ENCODE measurements at regions of chr14 and their contacts with region 1.

Region 1: DNA sequence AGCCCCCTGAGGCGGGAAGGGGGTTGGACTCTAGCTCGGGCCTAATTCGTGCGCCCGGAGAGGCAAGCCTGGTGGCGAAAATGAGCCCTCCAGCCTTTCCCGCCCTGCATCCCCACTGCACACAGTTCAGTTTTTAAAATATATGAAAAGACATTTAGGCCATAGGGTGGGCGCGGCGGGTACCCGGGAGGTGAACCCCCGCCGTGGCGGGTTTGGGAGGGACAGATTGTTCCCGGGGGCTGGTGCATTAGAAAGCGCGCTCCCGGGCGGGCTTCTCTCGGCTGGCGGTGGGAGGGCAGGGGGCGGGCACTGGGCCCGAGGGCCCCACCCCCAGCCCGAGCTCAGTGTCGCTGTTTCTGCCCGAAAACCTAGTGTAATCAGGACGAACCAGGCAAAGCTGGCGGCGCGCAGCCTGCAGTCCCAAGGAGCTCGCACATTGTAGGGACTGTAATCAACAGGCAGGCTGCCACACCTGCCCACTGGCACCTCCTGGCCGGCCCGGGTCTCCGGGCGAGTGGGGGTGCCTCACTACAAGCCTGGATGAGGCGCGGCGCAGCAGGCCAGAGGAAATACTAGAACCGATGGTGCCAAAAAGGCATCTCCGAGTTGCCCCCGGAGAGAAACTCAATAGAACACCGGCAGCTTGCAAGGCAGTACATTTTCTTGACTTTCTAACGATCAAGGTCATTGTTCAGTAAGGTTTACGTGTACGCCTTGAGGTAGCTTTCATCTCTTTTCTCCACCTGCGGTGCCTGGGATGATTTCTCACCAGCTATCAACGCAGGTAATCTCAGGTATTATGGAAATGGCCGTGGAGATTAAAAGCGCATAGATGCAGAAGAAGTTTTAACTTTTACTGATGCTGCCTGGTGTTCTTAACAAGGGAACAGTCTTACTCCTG is 764 bp upstream of the SPTB start:
- DNase-seq: peak; percentile 71 to 84 (median 76)
- ATAC-seq: peak; percentile 85
- H3K4me3 ChIP-seq: peak overlapping the region; percentile 78
- H3K27ac ChIP-seq: peak overlapping the region; percentile 51
- H3K4me1 ChIP-seq: peaks cover 18 to 20% of the 10 kb centered on the region in 2 experiments; a peak in 4 of 5 replicates
- H3K27me3 ChIP-seq: no peaks in the 10 kb centered on the region
- CTCF ChIP-seq: no peak
- EP300 ChIP-seq: peak; percentile 13; the same call in 1 of the 2 replicates
- POLR2A ChIP-seq: peak; percentile 60
- RAD21 ChIP-seq: no peak

Region 2: GRCh38 chr14:63641473-63642228 is 1238.8 kb before region 1 on chr14 and contains the start of gene WDR89:
- CTCF ChIA-PET with region 1: no interaction called
- POLR2A ChIA-PET with region 1: no interaction called
- in situ Hi-C with region 1: no loop called
- intact Hi-C with region 1: no loop called
- DNase-seq: peak; percentile 90 to 97 (median 95)
- ATAC-seq: peak; percentile 92
- H3K4me3 ChIP-seq: peak within 1 kb of the TSS; percentile 56
- H3K27ac ChIP-seq: peak within 1 kb of the TSS; percentile 92
- H3K4me1 ChIP-seq: peaks cover 0 to 7% of the 10 kb centered on the region in 2 experiments; a peak in 4 of 5 replicates
- H3K27me3 ChIP-seq: no peaks in the 10 kb centered on the region
- CTCF ChIP-seq: peak; percentile 55 to 83 (median 68)
- EP300 ChIP-seq: no peak
- POLR2A ChIP-seq: peak; percentile 88
- RAD21 ChIP-seq: peak; percentile 20 to 23; a peak in 2 of 4 replicates
- polyA plus RNA-seq, gene WDR89: 16.2 to 23.8 TPM

Region 3: DNA sequence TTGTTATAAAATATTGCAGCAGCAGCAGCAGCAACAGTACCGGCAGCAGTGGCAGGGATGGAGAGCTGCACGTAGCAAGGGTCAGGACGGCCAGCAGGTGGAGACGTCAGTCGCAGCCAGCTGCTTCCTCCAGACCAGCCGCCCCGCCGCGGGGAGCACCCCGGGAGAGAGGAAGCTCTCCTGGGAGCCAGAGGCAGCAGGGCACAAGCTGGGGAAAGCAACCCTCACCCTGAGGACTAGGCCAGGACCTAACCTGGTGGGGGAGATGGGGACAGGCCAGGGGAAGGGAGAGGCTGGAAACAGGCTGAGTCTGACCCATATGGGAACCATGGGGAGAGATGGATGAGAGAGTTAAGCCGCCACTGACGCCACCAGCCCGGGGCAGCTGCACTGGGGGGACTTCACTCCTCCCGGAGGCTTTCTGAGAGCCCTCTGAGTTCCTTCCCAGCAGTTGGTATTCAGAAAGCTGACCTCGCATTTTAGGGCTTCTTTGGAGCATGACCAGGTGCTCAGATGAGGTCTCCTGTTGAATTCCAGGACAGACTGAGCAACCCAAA is 57.1 kb before region 1 on chr14:
- CTCF ChIA-PET with region 1: no interaction called
- POLR2A ChIA-PET with region 1: interaction called, 3 read pairs
- in situ Hi-C with region 1: loop called (anchors 5 kb)
- intact Hi-C with region 1: loop called (anchors 2 kb)
- DNase-seq: peak; percentile 64 to 77 (median 72)
- ATAC-seq: peak; percentile 92
- H3K4me3 ChIP-seq: no peak overlapping the region
- H3K27ac ChIP-seq: no peak overlapping the region
- H3K4me1 ChIP-seq: peaks cover 24 to 36% of the 10 kb centered on the region in 2 experiments; a peak in 4 of 5 replicates
- H3K27me3 ChIP-seq: no peaks in the 10 kb centered on the region
- CTCF ChIP-seq: peak; percentile 62 to 82 (median 72)
- EP300 ChIP-seq: no peak
- POLR2A ChIP-seq: no peak
- RAD21 ChIP-seq: peak; percentile 77 to 93

Region 4: DNA sequence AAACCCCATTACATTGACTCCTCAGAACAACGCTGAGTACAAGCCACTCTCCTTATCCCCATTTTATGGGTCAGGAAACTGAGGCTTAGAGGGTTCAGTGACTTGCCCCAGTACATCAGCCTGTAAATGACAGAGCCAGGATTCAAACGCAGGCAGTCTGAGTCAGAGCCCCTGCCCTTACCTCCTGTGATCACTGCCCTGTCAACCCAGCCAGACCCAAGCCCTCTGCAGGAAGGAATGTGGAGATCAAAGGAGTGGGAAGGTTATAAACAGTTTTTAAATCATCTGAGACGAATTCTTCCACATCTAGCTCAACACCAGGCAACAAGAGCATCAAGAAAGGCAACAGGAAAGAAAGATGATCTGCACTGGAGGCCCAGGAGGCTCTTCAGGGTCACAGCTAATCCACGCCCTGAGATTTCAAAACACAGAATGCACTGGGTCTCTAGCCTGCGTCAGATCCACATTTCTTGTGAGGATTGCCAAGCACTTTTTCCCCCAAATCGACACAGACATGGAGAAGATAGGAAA is 39.3 kb before region 1 on chr14:
- CTCF ChIA-PET with region 1: no interaction called
- POLR2A ChIA-PET with region 1: interaction called, 4 read pairs
- in situ Hi-C with region 1: no loop called
- intact Hi-C with region 1: loop called (anchors 2 kb)
- DNase-seq: peak; percentile 55 to 77 (median 62)
- ATAC-seq: peak; percentile 73
- H3K4me3 ChIP-seq: peak overlapping the region; percentile 2; the same call in 1 of the 2 replicates
- H3K27ac ChIP-seq: peak overlapping the region; percentile 86
- H3K4me1 ChIP-seq: peaks cover 10 to 64% of the 10 kb centered on the region in 2 experiments; a peak in 3 of 5 replicates
- H3K27me3 ChIP-seq: no peaks in the 10 kb centered on the region
- CTCF ChIP-seq: peak; percentile 43 to 61 (median 47)
- EP300 ChIP-seq: no peak
- POLR2A ChIP-seq: no peak
- RAD21 ChIP-seq: 0 out of 4 replicates have a peak, but pooled peaks of 1 of the 2 experiments have one; percentile 21

Region 5: GRCh38 chr14:64865109-64865508 is 15.4 kb before region 1 on chr14:
- CTCF ChIA-PET with region 1: no interaction called
- POLR2A ChIA-PET with region 1: interaction called, 24 read pairs
- in situ Hi-C with region 1: no loop called
- intact Hi-C with region 1: no loop called
- DNase-seq: no peak
- ATAC-seq: no peak
- H3K4me3 ChIP-seq: no peak overlapping the region
- H3K27ac ChIP-seq: no peak overlapping the region
- H3K4me1 ChIP-seq: peaks cover 0 to 2% of the 10 kb centered on the region in 2 experiments; a peak in 3 of 5 replicates
- H3K27me3 ChIP-seq: no peaks in the 10 kb centered on the region
- CTCF ChIP-seq: no peak
- EP300 ChIP-seq: no peak
- POLR2A ChIP-seq: no peak
- RAD21 ChIP-seq: no peak

Region 6: GRCh38 chr14:64870160-64870559 is 10.3 kb before region 1 on chr14:
- CTCF ChIA-PET with region 1: no interaction called
- POLR2A ChIA-PET with region 1: interaction called, 24 read pairs
- in situ Hi-C with region 1: no loop called
- intact Hi-C with region 1: no loop called
- DNase-seq: no peak
- ATAC-seq: no peak
- H3K4me3 ChIP-seq: no peak overlapping the region
- H3K27ac ChIP-seq: no peak overlapping the region
- H3K4me1 ChIP-seq: peaks cover 0 to 7% of the 10 kb centered on the region in 2 experiments; a peak in 2 of 5 replicates
- H3K27me3 ChIP-seq: no peaks in the 10 kb centered on the region
- CTCF ChIP-seq: no peak
- EP300 ChIP-seq: no peak
- POLR2A ChIP-seq: no peak
- RAD21 ChIP-seq: no peak